ENCODE measurements at regions of chr9 and their contacts with region 1.

Region 1: GRCh38 chr9:91361291-91362050 is at the start of gene AUH:
- DNase-seq: peak; percentile 77 to 94 (median 87)
- ATAC-seq: peak; percentile 98
- H3K4me3 ChIP-seq: peak within 1 kb of the TSS; percentile 82
- H3K4me3 Mint-ChIP-seq: peak within 1 kb of the TSS; percentile 89 to 99 (median 98)
- H3K27ac ChIP-seq: peak within 1 kb of the TSS; percentile 82
- H3K27ac Mint-ChIP-seq: peak within 1 kb of the TSS; percentile 93 to 98 (median 96)
- H3K4me1 ChIP-seq: peaks cover 9 to 18% of the 10 kb centered on the region in 2 donors
- H3K4me1 Mint-ChIP-seq: peaks cover 38 to 59% (median 54%) of the 10 kb centered on the region in 7 donors
- H3K27me3 ChIP-seq: no peaks in the 10 kb centered on the region
- H3K27me3 Mint-ChIP-seq: no peaks in the 10 kb centered on the region
- total RNA-seq, gene AUH: 17.2 to 30.1 (median 25.9) TPM

Region 2: GRCh38 chr9:91036826-91037510 is 324.5 kb before region 1 on chr9:
- CTCF ChIA-PET with region 1: no interaction called
- POLR2A ChIA-PET with region 1: no interaction called
- intact Hi-C with region 1: loop called in 1 of 2 experiments (anchors 2 kb)
- DNase-seq: peak; percentile 31 to 69 (median 54)
- ATAC-seq: peak; percentile 88
- H3K4me3 ChIP-seq: no peak overlapping the region
- H3K4me3 Mint-ChIP-seq: peak overlapping the region in 9 of 10 donors; percentile 13 to 73 (median 37)
- H3K27ac ChIP-seq: no peak overlapping the region
- H3K27ac Mint-ChIP-seq: peak overlapping the region in 5 of 9 donors; percentile 13 to 38 (median 26)
- H3K4me1 ChIP-seq: peaks cover 8 to 11% of the 10 kb centered on the region in 2 donors
- H3K4me1 Mint-ChIP-seq: peaks cover 10 to 65% (median 11%) of the 10 kb centered on the region in 7 donors
- H3K27me3 ChIP-seq: no peaks in the 10 kb centered on the region
- H3K27me3 Mint-ChIP-seq: peaks cover 0 to 34% (median 14%) of the 10 kb centered on the region in 5 donors

Region 3: DNA sequence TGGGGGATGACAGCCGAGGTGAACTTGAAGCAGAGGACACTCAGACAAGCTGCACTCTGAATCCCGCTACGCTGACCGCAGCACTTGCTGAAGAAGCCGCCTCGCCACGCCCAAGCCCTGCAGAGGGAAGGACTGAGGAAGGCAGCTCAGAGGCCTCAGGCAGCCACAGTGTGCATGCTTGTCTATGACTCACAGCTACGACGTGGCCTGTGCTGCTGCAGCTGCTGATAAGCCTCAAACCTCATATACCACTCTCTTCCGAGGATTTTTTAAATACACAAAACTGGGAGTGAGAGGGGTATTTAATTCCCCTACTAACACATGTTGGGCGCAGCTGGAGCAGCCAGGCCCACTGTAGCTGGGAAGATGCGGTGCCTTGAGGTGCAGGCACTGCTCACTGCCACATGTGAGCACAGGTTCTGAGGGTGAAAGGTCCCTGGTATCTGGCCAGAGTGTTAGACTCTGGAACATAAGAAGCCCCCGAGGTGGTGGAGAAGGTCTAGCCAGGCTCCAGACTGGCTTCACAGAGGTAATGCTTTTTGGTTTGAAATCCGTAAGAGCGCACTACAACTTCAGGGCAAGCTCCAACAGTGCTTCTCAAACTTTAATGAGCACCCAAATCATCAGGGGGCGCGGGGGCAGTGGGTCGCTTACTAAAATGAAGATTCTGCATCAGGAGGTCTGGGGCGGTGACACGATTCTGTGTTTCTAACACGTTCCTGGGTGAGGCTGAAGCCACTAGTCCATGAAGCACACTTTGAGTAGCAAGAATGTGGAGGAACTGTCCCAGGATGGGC is 196.5 kb before region 1 on chr9:
- CTCF ChIA-PET with region 1: no interaction called
- POLR2A ChIA-PET with region 1: no interaction called
- intact Hi-C with region 1: loop called in 1 of 2 experiments (anchors 5 kb)
- DNase-seq: peak in 1 of 9 donors; percentile 78
- ATAC-seq: peak; percentile 90
- H3K4me3 ChIP-seq: no peak overlapping the region
- H3K4me3 Mint-ChIP-seq: peak overlapping the region in 2 of 10 donors; percentile 6 to 89
- H3K27ac ChIP-seq: no peak overlapping the region
- H3K27ac Mint-ChIP-seq: peak overlapping the region in 2 of 9 donors; percentile 72 to 97
- H3K4me1 ChIP-seq: peaks cover 15 to 38% of the 10 kb centered on the region in 2 donors
- H3K4me1 Mint-ChIP-seq: peaks cover 13 to 63% (median 35%) of the 10 kb centered on the region in 7 donors
- H3K27me3 ChIP-seq: no peaks in the 10 kb centered on the region
- H3K27me3 Mint-ChIP-seq: no peaks in the 10 kb centered on the region

Region 4: GRCh38 chr9:91207729-91208418 is 153.6 kb before region 1 on chr9:
- CTCF ChIA-PET with region 1: no interaction called
- POLR2A ChIA-PET with region 1: no interaction called
- intact Hi-C with region 1: loop called in 1 of 2 experiments (anchors 5 kb)
- DNase-seq: peak in 5 of 9 donors; percentile 13 to 24 (median 21)
- ATAC-seq: peak; percentile 74
- H3K4me3 ChIP-seq: peak overlapping the region; percentile 4
- H3K4me3 Mint-ChIP-seq: peak overlapping the region; percentile 49 to 89 (median 80)
- H3K27ac ChIP-seq: peak overlapping the region; percentile 31
- H3K27ac Mint-ChIP-seq: peak overlapping the region; percentile 52 to 91 (median 83)
- H3K4me1 ChIP-seq: peaks cover 17 to 18% of the 10 kb centered on the region in 2 donors
- H3K4me1 Mint-ChIP-seq: peaks cover 13 to 61% (median 37%) of the 10 kb centered on the region in 7 donors
- H3K27me3 ChIP-seq: no peaks in the 10 kb centered on the region
- H3K27me3 Mint-ChIP-seq: no peaks in the 10 kb centered on the region

Region 5: GRCh38 chr9:91346652-91347051 is 14.8 kb before region 1 on chr9:
- CTCF ChIA-PET with region 1: no interaction called
- POLR2A ChIA-PET with region 1: interaction called, 3 read pairs
- intact Hi-C with region 1: loop called in 1 of 2 experiments (anchors 1 kb)
- DNase-seq: no peak
- ATAC-seq: peak; percentile 20
- H3K4me3 ChIP-seq: no peak overlapping the region
- H3K4me3 Mint-ChIP-seq: no peak overlapping the region
- H3K27ac ChIP-seq: no peak overlapping the region
- H3K27ac Mint-ChIP-seq: peak overlapping the region in 1 of 9 donors; percentile 65
- H3K4me1 ChIP-seq: no peaks in the 10 kb centered on the region
- H3K4me1 Mint-ChIP-seq: peaks cover 21 to 48% (median 24%) of the 10 kb centered on the region in 7 donors
- H3K27me3 ChIP-seq: no peaks in the 10 kb centered on the region
- H3K27me3 Mint-ChIP-seq: no peaks in the 10 kb centered on the region

Region 6: DNA sequence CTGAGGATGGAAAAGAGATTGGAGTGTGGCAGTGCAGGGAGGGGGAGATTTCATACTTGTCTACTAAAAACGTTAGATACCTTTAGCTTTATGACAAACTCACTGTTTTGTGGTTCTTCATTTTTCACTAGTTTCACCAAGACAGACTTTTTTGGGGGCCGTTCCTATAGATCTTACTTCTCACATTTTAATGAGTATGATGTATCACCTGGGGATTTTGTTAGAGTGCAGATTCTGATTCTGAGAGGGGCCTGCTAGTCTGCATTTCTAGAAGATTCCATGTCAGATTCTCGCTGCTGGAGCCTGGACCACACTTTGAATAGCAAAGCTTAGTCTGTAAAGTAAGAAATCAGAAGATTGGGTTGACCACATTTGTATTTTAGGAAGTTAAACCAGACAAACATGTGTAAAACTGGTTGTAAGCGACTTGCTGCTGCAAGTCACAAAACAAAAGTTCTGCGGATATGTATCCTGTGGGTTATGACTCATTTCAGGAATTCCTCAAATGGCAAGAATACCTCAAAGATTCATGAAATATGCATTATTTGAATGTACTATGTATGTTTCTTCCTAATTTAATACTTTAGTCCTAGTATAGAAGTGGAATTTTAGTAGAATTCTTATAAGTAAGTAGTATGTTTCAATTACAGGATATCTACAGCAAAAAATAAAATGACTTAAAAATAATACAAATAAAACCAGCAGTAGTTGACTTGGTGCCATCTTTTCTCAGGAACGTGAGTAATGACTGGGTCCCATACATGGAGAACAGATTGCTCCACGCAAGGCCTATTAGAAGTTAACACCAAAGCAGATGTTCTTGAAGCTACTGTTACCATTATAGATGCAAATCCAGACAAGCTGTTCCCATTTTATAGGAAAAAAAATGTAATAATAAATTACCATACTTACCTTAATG is 34.3 kb after region 1 on chr9:
- CTCF ChIA-PET with region 1: interaction called, 3 read pairs
- POLR2A ChIA-PET with region 1: interaction called, 3 read pairs
- intact Hi-C with region 1: loop called in 1 of 2 experiments (anchors 2 kb)
- DNase-seq: peak in 1 of 9 donors; percentile 32
- ATAC-seq: peak; percentile 27
- H3K4me3 ChIP-seq: no peak overlapping the region
- H3K4me3 Mint-ChIP-seq: peak overlapping the region in 1 of 10 donors; percentile 68
- H3K27ac ChIP-seq: no peak overlapping the region
- H3K27ac Mint-ChIP-seq: peak overlapping the region in 1 of 9 donors; percentile 77
- H3K4me1 ChIP-seq: no peaks in the 10 kb centered on the region
- H3K4me1 Mint-ChIP-seq: peaks cover 0 to 20% (median 0%) of the 10 kb centered on the region in 7 donors
- H3K27me3 ChIP-seq: no peaks in the 10 kb centered on the region
- H3K27me3 Mint-ChIP-seq: peaks cover 0 to 3% (median 0%) of the 10 kb centered on the region in 5 donors

Region 7: DNA sequence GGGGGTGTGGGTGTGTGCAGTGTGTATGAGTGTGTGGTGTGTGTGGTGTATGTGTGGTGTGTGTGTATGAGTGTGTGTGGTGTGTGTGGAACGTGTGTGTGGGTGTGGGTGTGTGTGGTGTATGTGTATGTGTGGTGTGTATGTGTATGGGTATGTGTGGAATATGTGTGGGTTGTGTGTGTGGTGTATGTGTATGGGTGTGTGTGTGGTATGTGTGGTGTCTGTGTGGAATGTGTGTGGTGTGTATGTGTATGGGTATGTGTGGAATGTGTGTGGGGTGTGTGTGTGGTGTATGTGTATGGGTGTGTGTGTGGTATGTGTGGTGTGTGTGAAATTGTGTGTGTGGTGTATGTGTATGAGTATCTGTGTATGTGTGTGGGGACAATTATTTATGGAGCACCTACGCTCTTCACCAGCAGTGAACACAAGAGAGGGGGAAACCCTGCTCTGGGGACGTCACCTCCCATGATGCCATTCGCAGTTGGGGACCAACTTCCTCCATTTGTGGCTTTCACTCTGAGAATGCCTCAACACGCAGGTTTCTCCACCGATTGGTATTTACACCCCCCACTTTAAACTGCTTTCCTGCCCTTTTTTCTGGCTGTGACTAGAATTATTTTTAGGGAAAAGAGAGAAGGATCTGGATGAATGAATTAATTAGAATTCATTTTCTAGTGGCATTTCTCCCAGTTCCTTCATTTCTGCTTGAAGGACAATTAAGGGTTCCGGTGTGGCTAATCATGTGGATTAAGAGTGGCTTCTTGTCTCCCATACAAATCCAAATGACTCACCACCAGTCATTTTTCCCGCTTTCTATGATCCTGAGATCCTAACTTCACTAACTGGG is 350.5 kb after region 1 on chr9:
- CTCF ChIA-PET with region 1: no interaction called
- POLR2A ChIA-PET with region 1: no interaction called
- intact Hi-C with region 1: loop called in 1 of 2 experiments (anchors 5 kb)
- DNase-seq: peak in 7 of 9 donors; percentile 6 to 64 (median 34)
- ATAC-seq: peak; percentile 90
- H3K4me3 ChIP-seq: peak overlapping the region; percentile 2
- H3K4me3 Mint-ChIP-seq: peak overlapping the region in 1 of 10 donors; percentile 15
- H3K27ac ChIP-seq: no peak overlapping the region
- H3K27ac Mint-ChIP-seq: no peak overlapping the region
- H3K4me1 ChIP-seq: peaks cover 5 to 6% of the 10 kb centered on the region in 2 donors
- H3K4me1 Mint-ChIP-seq: peaks cover 0 to 6% (median 3%) of the 10 kb centered on the region in 7 donors
- H3K27me3 ChIP-seq: no peaks in the 10 kb centered on the region
- H3K27me3 Mint-ChIP-seq: peaks cover 19 to 34% (median 26%) of the 10 kb centered on the region in 5 donors